GM13976 (cell line): ENCODE measurements at regions of chr4 and their contacts with region 1.

Region 1: GRCh38 chr4:182478475-182478874 is 235.3 kb downstream of the TENM3 start:
- DNase-seq: peak; percentile 48
- CTCF ChIP-seq: peak; percentile 44

Region 2: DNA sequence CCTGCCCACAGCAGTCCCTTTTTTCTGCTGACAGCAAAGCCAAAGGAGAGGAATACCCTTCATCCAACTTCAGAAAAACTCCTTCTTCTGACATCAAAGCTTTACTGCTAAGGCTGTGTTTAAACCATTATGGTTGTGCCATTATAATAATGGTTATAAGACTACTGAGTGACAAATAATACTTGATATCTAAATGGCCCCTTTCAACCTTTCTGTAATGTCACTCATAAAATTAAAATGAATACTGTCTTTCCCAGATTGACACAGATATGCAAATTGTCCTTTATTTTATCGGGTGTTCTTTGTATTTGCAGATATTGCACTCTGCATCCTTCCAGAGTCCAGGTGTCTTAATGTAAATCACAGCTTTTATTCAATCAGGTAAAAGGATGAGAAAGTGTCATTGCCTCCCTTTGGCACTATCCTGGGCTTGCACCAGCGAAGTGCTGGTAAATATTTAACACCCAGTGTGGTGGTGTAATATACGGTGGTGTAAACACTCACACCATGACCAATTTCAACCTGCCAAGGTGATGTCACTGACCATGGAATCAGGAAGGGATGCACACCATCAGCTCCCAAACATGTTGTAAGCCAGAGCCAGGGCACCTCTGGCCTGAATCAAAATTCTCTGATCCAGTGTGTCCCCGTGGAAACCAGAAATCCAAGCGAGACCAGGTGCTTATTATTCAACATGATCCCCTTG is 374.7 kb before region 1 on chr4:
- in situ Hi-C with region 1: no loop called
- DNase-seq: no peak
- CTCF ChIP-seq: no peak

Region 3: DNA sequence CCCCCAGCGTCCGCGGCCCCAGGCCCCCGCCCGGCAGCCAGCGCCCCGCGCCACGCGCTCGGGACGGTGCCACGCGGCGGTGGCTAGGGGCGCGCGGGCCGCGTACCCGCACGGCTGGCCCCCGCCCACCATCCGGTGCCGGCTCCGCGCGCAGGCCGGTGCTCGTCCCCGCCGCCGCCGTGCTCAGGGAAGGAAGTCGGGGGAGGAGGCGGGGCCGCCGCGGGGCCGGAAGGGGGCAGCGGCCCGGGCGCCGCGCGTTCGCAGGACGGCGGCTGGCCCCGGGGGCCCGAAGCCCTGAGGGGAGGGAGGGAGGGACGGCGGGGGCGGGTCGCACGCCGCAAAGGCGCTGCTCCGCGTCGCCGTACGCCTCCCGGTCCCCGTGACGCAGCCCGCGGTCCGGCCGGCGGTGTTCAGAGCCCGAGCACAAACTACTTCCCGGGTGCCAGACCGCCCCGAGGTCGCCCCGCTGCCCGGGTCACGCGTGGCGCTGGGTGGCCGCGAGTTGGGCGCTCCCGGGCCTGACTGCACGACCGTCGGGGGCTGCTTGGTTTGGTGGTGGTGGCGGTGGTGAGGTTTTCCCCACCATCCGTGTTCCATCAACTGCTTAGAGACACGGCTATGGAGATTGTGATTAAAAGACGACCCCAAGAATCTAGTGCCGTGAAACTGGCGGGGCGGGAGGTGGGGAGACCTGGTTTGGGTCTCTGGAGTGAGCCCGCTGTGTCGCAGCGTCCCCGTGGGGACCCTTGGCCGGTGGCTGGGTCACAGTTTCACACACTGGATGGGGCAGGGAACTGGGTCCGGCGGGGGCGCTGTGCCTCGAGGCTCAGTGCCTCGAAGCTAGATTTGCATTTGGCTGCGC is 438.9 kb after region 1 on chr4 and contains the start of gene DCTD:
- in situ Hi-C with region 1: loop called (anchors 25 kb)
- DNase-seq: peak; percentile 88
- CTCF ChIP-seq: peak; percentile 31